A673 (cell line): ENCODE measurements at regions of chr13 and their contacts with region 1.

Region 1: DNA sequence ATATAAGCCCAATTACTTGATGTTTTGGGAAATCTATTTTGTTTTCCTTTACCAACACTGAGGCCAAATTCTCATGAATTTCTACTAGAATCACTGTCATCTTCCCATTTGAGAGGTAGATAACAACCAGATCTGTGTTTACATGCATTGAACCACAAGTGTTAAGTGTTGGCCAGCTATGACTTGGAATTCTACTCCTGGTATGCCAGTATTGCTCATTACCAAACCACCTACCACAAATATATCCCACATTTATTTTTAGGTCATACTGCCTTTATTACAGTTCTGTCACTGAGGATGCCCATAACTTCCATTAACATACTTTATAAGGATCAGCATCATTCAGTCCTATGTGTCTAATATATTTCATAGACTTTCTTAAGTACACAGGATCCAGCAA is 328.9 kb downstream of the DIAPH3 start:
- DNase-seq: no peak
- H3K4me3 ChIP-seq: no peak overlapping the region
- H3K27ac ChIP-seq: peak overlapping the region; percentile 77
- H3K4me1 ChIP-seq: peaks cover 54% of the 10 kb centered on the region
- H3K27me3 ChIP-seq: no peaks in the 10 kb centered on the region
- CTCF ChIP-seq: no peak

Region 2: GRCh38 chr13:59771272-59771671 is 63.5 kb before region 1 on chr13:
- CTCF ChIA-PET with region 1: no interaction called
- POLR2A ChIA-PET with region 1: no interaction called
- intact Hi-C with region 1: loop called (anchors 2 kb)
- DNase-seq: peak; percentile 73
- H3K4me3 ChIP-seq: no peak overlapping the region
- H3K27ac ChIP-seq: peak overlapping the region; percentile 70
- H3K4me1 ChIP-seq: peaks cover 83% of the 10 kb centered on the region
- H3K27me3 ChIP-seq: no peaks in the 10 kb centered on the region
- CTCF ChIP-seq: peak; percentile 80

Region 3: DNA sequence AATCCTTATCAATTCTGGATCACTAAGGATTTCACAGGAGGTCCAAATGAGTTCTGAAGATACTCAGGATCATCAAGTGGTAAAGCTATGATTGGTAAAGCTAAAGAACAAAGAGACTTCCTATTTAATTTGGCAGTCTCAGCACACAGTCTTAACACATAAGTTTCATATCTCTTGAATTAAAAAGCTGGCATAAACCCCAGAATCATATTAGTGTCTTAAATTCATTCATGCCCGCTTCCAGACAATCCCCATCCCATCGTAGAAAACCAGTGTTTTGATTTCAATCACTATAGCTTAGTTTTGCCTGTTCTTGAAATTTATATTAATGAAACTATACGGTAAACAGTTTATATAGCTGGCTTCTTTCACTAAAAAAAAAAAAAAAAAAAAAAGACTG is 50.3 kb after region 1 on chr13:
- CTCF ChIA-PET with region 1: no interaction called
- POLR2A ChIA-PET with region 1: interaction called, 12 read pairs
- intact Hi-C with region 1: no loop called
- DNase-seq: peak; percentile 49
- H3K4me3 ChIP-seq: no peak overlapping the region
- H3K27ac ChIP-seq: peak overlapping the region; percentile 40
- H3K4me1 ChIP-seq: peaks cover 32% of the 10 kb centered on the region
- H3K27me3 ChIP-seq: no peaks in the 10 kb centered on the region
- CTCF ChIP-seq: no peak

Region 4: DNA sequence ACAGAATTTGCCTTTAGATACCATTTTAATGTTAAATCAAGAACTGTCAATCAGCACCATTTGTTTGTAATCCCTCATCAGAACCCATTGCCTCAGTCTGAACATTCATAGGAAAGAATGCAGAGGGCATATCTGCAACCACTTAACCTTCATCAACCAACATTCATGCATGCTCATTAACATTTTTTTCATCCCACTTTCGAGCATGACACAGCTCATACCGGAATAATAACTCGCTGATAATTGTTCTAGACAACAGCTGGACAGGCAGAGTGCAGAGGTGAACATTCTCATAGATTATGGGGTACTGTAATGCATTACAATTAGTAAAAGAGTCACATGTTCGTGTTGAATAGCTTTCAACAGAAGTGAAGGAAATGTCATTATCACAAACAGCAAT is 112.1 kb after region 1 on chr13:
- CTCF ChIA-PET with region 1: no interaction called
- POLR2A ChIA-PET with region 1: no interaction called
- intact Hi-C with region 1: loop called (anchors 5 kb)
- DNase-seq: peak; percentile 78
- H3K4me3 ChIP-seq: no peak overlapping the region
- H3K27ac ChIP-seq: peak overlapping the region; percentile 86
- H3K4me1 ChIP-seq: peaks cover 60% of the 10 kb centered on the region
- H3K27me3 ChIP-seq: no peaks in the 10 kb centered on the region
- CTCF ChIP-seq: no peak

Region 5: DNA sequence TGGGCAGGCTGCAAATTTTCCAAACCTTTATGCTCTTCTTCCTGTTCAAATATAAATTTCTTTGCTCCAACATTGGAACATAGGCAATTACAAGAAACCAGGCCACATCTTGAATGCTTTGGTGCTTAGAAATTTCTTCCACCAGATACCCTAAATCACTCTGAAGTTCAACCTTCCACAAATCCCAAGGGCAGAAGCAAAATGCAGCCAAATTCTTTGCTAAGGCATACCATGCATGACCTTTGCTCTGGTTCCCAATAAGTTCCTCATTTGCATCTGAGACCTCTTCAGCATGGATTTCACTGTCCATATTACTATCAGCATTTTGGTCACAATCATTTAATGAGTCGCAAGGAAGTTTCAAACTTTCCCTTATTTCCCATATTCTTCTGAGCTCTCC is 198.1 kb after region 1 on chr13:
- CTCF ChIA-PET with region 1: no interaction called
- POLR2A ChIA-PET with region 1: no interaction called
- intact Hi-C with region 1: no loop called
- DNase-seq: no peak
- H3K4me3 ChIP-seq: no peak overlapping the region
- H3K27ac ChIP-seq: no peak overlapping the region
- H3K4me1 ChIP-seq: peaks cover 3% of the 10 kb centered on the region
- H3K27me3 ChIP-seq: no peaks in the 10 kb centered on the region
- CTCF ChIP-seq: no peak